Left colon (tissue), 2 donors: ENCODE measurements at regions of chr3 and their contacts with region 1.

Region 1: DNA sequence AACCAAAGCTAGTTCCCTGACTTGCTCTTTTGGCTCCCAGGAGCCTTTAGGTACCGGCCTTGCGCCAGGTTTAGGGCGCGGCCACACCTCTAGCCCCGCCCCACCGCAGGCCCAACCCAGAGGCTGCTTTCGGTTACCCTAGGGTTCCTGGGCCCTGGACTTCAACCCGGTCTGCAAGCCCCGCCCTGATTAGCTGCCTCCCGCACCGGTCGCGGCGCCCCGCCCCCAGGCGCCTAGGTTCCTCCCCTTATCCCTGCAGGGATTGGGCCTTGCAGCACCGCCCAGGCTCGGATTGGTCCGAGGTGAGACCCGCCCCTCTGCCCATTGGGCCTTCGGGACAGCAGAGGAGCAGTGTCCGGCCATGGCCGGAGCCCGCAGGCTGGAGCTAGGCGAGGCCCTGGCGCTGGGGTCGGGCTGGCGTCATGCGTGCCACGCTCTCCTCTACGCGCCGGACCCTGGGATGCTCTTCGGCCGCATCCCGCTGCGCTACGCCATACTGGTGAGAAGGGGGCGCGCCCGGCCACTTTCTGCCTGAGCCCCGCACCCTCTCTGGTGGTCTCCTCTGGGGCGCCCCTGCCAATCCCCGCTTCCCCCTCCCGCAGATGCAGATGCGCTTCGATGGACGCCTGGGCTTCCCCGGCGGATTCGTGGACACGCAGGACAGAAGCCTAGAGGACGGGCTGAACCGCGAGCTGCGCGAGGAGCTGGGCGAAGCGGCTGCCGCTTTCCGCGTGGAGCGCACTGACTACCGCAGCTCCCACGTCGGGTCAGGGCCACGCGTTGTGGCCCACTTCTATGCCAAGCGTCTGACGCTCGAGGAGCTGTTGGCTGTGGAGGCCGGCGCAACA is at the start of gene NUDT16:
- DNase-seq: peak; percentile 99 to 100
- ATAC-seq: peak; percentile 88
- total RNA-seq, gene NUDT16: 39.0 to 51.7 TPM

Region 2: GRCh38 chr3:131033480-131034080 is 348.1 kb before region 1 on chr3:
- intact Hi-C with region 1: loop called in 1 of 2 experiments (anchors 10 kb)
- DNase-seq: no peak
- ATAC-seq: peak; percentile 75

Region 3: DNA sequence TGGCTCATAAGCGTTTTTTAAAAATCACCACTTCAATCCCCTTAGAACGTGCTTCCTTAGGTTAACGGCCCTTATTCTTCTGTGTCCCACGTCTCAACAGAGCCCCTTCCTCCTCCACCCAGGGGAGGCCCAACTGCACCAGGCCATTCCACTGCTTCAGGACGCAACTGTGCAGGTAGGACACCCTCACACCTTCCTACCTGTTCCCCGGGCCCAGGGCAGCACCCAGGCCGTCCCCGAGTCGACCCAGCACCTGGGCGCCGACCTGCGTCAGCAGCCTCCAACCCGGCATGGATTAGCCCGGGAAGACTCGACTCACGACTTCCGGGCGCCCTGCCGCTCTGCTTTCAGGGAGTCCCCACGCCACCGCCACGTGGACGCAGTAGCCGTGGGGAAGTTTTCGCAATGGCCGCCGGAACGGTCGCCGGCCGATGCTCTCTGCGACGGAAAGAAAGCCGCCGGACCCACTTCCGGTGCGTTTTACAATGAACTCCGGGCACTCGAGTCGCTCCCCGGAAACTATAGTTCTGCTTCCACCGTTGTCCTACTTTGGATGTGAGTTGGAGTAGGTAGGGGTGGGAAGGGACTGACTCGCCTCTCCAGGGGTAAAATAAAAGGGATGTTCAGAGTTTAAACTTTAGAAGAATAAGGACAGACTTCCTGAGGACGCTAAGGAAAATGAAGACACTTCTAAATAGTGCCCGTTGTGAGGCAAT is 121.0 kb after region 1 on chr3 and contains the start of gene MRPL3:
- intact Hi-C with region 1: loop called in 1 of 2 experiments (anchors 10 kb)
- DNase-seq: peak; percentile 85 to 90
- ATAC-seq: peak; percentile 96
- total RNA-seq, gene MRPL3: 52.4 to 65.4 TPM